Posterior vena cava (tissue), 2 donors: ENCODE measurements at regions of chr2 and their contacts with region 1.

Region 1: GRCh38 chr2:65383541-65384488 is 48.6 kb downstream of the SPRED2 start:
- DNase-seq: no peak

Region 2: GRCh38 chr2:65416945-65417344 is 33.1 kb after region 1 on chr2:
- intact Hi-C with region 1: loop called in 1 of 2 experiments (anchors 1 kb)
- DNase-seq: no peak